WTC11 (cell line): ENCODE measurements at regions of chr15 and their contacts with region 1.

Region 1: GRCh38 chr15:82064824-82065223 is 19.0 kb upstream of the MEX3B start:
- DNase-seq: no peak
- ATAC-seq: no peak
- H3K4me3 Mint-ChIP-seq: no peak overlapping the region
- H3K27ac Mint-ChIP-seq: no peak overlapping the region
- H3K4me1 Mint-ChIP-seq: peaks cover 40% of the 10 kb centered on the region
- H3K27me3 Mint-ChIP-seq: peaks cover 68% of the 10 kb centered on the region
- CTCF ChIP-seq: no peak

Region 2: GRCh38 chr15:82046666-82047452 is 18.0 kb before region 1 on chr15:
- CTCF ChIA-PET with region 1: interaction called, 11 read pairs
- POLR2A ChIA-PET with region 1: interaction called, 11 read pairs
- DNase-seq: peak; percentile 97
- ATAC-seq: peak; percentile 53
- H3K4me3 Mint-ChIP-seq: peak overlapping the region; percentile 89
- H3K27ac Mint-ChIP-seq: peak overlapping the region; percentile 85; the same call in 1 of the 2 replicates
- H3K4me1 Mint-ChIP-seq: peaks cover 32% of the 10 kb centered on the region
- H3K27me3 Mint-ChIP-seq: peaks cover 46% of the 10 kb centered on the region
- CTCF ChIP-seq: peak; percentile 57

Region 3: DNA sequence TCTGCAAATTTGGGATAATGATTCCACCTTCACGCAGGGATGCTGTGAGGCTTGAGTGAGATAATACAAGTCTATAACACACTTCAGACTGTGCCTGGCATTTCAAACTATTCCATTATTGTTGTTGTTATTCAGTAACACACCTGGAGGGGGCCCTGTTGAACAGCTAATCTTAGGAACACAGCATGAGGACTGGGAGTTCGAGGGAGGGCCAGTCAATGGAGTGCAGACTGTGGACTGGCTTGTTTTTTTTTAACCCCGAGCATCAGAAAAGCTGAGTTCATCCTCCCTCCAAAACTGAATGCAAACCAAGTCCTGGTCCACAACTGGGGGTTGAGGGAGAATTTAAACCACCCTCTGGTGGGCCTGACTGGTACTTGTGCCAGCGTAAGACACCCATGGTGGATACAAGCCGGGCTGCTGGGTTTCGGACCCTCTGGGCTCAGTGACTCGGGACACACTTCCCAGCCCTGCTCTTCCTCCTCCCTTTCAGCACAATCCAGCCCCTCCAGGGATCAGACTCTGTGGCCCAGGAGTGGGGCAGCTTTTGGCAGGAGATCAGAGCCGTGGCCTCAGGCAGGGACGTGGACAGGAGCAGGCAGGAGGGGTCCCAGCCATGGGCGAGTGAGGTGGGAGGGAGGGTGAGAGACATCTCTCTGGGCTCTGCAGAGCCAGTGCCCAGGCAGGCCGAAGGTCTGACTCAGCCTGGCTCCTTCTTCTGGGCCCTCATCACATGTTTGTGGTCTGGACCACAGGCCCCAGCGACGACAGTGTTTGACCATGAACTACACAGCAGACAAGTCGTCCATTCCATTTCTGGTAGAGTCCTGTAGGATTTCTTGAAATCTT is 17.3 kb after region 1 on chr15:
- CTCF ChIA-PET with region 1: interaction called, 10 read pairs
- POLR2A ChIA-PET with region 1: no interaction called
- DNase-seq: peak; percentile 54
- ATAC-seq: peak; percentile 94
- H3K4me3 Mint-ChIP-seq: no peak overlapping the region
- H3K27ac Mint-ChIP-seq: no peak overlapping the region
- H3K4me1 Mint-ChIP-seq: peaks cover 7% of the 10 kb centered on the region; the same call in 1 of the 2 replicates
- H3K27me3 Mint-ChIP-seq: no peaks in the 10 kb centered on the region; the same call in 1 of the 2 replicates
- CTCF ChIP-seq: peak; percentile 49

Region 4: GRCh38 chr15:82100111-82100929 is 35.5 kb after region 1 on chr15:
- CTCF ChIA-PET with region 1: interaction called, 10 read pairs
- POLR2A ChIA-PET with region 1: no interaction called
- DNase-seq: no peak
- ATAC-seq: peak; percentile 81
- H3K4me3 Mint-ChIP-seq: no peak overlapping the region
- H3K27ac Mint-ChIP-seq: peak overlapping the region; percentile 83
- H3K4me1 Mint-ChIP-seq: peaks cover 32% of the 10 kb centered on the region
- H3K27me3 Mint-ChIP-seq: peaks cover 5% of the 10 kb centered on the region
- CTCF ChIP-seq: no peak